Caco-2 (cell line): ENCODE measurements at regions of chr3 and their contacts with region 1.

Region 1: GRCh38 chr3:52339612-52340011 is 23.5 kb downstream of the DNAH1 start:
- DNase-seq: peak; percentile 55 to 74
- H3K4me3 ChIP-seq: no peak overlapping the region
- H3K4me3 Mint-ChIP-seq: no peak overlapping the region
- H3K27ac Mint-ChIP-seq: no peak overlapping the region
- H3K4me1 ChIP-seq: no peaks in the 10 kb centered on the region
- H3K4me1 Mint-ChIP-seq: peaks cover 9% of the 10 kb centered on the region
- H3K27me3 ChIP-seq: no peaks in the 10 kb centered on the region
- H3K27me3 Mint-ChIP-seq: no peaks in the 10 kb centered on the region
- CTCF ChIP-seq: peak; percentile 64 to 77

Region 2: GRCh38 chr3:52220380-52221026 is 119.1 kb before region 1 on chr3:
- CTCF ChIA-PET with region 1: interaction called, 24 read pairs
- POLR2A ChIA-PET with region 1: no interaction called
- intact Hi-C with region 1: no loop called
- DNase-seq: peak; percentile 84 to 88
- H3K4me3 ChIP-seq: no peak overlapping the region
- H3K4me3 Mint-ChIP-seq: no peak overlapping the region
- H3K27ac Mint-ChIP-seq: no peak overlapping the region
- H3K4me1 ChIP-seq: peaks cover 4% of the 10 kb centered on the region; the same call in 1 of the 2 replicates
- H3K4me1 Mint-ChIP-seq: peaks cover 6% of the 10 kb centered on the region
- H3K27me3 ChIP-seq: no peaks in the 10 kb centered on the region
- H3K27me3 Mint-ChIP-seq: no peaks in the 10 kb centered on the region
- CTCF ChIP-seq: peak; percentile 88 to 91

Region 3: DNA sequence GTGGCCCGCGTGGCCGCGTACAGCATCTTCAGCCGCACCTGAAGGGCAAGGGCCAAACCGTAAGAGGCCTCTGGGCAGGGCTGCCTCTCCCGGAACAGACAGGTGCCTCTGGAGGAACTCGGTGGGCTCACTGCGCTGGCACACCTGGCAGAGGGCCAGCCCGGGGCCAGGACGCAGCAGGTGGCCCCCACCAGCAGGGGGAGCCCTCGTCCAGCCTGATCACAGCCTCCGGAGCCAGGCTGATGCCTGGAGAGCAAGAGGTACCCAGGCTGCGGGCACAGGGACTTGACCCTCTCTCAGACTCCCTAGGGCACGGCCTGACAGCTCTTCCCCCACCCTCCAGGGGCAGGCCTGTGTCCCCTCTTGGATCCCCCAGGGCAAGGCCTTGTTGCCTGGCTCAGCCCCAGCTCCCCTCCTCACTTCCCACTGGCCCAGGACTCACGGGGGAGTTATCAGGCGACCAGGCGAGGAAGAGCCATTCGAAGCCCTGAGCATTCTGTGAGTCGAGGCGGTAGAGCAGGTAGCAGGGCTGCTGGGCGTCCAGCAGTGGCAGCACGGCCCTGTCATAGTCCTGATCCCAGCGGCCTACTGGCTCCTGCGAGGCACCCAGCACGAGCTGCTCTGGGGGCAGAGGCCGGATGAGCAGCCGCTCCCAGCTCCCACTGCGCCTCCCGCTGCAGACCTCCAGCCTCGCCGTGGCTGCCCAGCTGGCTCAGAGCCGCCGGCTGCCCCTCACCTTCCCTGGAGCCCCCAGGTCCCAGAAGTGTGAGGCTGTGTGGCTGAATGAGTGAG is 107.9 kb before region 1 on chr3:
- CTCF ChIA-PET with region 1: interaction called, 11 read pairs
- POLR2A ChIA-PET with region 1: no interaction called
- intact Hi-C with region 1: loop called (anchors 1 kb)
- DNase-seq: peak in 1 of 2 experiments; percentile 81
- H3K4me3 ChIP-seq: no peak overlapping the region
- H3K4me3 Mint-ChIP-seq: no peak overlapping the region
- H3K27ac Mint-ChIP-seq: no peak overlapping the region
- H3K4me1 ChIP-seq: no peaks in the 10 kb centered on the region
- H3K4me1 Mint-ChIP-seq: no peaks in the 10 kb centered on the region
- H3K27me3 ChIP-seq: no peaks in the 10 kb centered on the region
- H3K27me3 Mint-ChIP-seq: no peaks in the 10 kb centered on the region
- CTCF ChIP-seq: peak; percentile 79 to 91

Region 4: GRCh38 chr3:52238761-52239701 is 100.6 kb before region 1 on chr3 and contains the start of gene TWF2:
- CTCF ChIA-PET with region 1: interaction called, 4 read pairs
- POLR2A ChIA-PET with region 1: no interaction called
- intact Hi-C with region 1: loop called (anchors 2 kb)
- DNase-seq: peak; percentile 68 to 88
- H3K4me3 ChIP-seq: peak within 1 kb of the TSS; percentile 100
- H3K4me3 Mint-ChIP-seq: peak within 1 kb of the TSS; percentile 83
- H3K27ac Mint-ChIP-seq: peak within 1 kb of the TSS; percentile 91
- H3K4me1 ChIP-seq: peaks cover 18% of the 10 kb centered on the region; the same call in 1 of the 2 replicates
- H3K4me1 Mint-ChIP-seq: peaks cover 8% of the 10 kb centered on the region
- H3K27me3 ChIP-seq: no peaks in the 10 kb centered on the region
- H3K27me3 Mint-ChIP-seq: no peaks in the 10 kb centered on the region
- CTCF ChIP-seq: peak in 1 of 2 experiments; percentile 53
- total RNA-seq, gene TWF2: 29.9 and 30.5 TPM in 2 replicates

Region 5: GRCh38 chr3:52291508-52292181 is 48.0 kb before region 1 on chr3:
- CTCF ChIA-PET with region 1: interaction called, 8 read pairs
- POLR2A ChIA-PET with region 1: no interaction called
- intact Hi-C with region 1: loop called (anchors 1 kb)
- DNase-seq: peak; percentile 49 to 65
- H3K4me3 ChIP-seq: peak overlapping the region; percentile 89
- H3K4me3 Mint-ChIP-seq: peak overlapping the region; percentile 80
- H3K27ac Mint-ChIP-seq: peak overlapping the region; percentile 63
- H3K4me1 ChIP-seq: peaks cover 22% of the 10 kb centered on the region
- H3K4me1 Mint-ChIP-seq: peaks cover 32% of the 10 kb centered on the region
- H3K27me3 ChIP-seq: no peaks in the 10 kb centered on the region
- H3K27me3 Mint-ChIP-seq: no peaks in the 10 kb centered on the region
- CTCF ChIP-seq: peak; percentile 58 to 64

Region 6: DNA sequence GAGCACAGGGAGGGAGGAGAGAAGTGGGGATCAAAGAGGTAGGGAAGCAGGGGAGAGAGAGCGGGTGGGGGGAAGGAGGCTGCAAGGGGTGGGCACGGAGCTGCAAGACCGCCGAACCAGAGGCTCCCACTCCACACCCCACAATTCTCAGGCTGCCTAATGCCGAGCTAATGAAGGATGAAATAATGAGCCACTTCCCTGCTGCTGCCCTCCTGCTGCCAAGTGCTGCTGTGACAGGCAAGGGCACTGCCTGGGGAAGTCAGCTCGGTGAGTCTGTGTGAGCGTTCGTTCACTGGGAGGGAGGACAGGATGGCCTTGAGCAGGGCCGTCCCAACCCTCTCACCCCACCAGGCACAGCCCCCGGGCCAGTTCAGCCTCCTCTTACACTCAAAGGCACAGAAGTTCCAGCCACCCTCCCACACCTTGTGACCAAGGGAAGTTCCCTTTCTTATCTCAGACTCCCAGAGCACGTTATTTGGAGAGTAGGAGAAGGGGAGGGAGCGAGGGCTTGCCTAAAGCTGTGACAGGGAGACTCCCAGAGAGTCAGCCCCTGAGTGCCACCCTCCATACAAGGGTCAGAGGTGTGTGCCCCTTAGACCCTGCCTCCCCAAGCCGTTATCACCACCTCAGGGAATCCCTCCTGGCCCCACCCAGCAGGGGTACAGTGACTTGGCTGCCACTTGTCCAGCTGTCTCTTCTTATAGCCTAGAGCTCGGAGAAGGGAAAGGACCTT is 39.6 kb before region 1 on chr3:
- CTCF ChIA-PET with region 1: interaction called, 7 read pairs
- POLR2A ChIA-PET with region 1: interaction called, 5 read pairs
- intact Hi-C with region 1: loop called (anchors 2 kb)
- DNase-seq: peak; percentile 72 to 81
- H3K4me3 ChIP-seq: no peak overlapping the region
- H3K4me3 Mint-ChIP-seq: peak overlapping the region; percentile 56
- H3K27ac Mint-ChIP-seq: peak overlapping the region; percentile 35
- H3K4me1 ChIP-seq: peaks cover 43% of the 10 kb centered on the region
- H3K4me1 Mint-ChIP-seq: peaks cover 33% of the 10 kb centered on the region
- H3K27me3 ChIP-seq: no peaks in the 10 kb centered on the region
- H3K27me3 Mint-ChIP-seq: no peaks in the 10 kb centered on the region
- CTCF ChIP-seq: peak in 1 of 2 experiments; percentile 16